ENCODE measurements at regions of chr6 and their contacts with region 1.

Region 1: DNA sequence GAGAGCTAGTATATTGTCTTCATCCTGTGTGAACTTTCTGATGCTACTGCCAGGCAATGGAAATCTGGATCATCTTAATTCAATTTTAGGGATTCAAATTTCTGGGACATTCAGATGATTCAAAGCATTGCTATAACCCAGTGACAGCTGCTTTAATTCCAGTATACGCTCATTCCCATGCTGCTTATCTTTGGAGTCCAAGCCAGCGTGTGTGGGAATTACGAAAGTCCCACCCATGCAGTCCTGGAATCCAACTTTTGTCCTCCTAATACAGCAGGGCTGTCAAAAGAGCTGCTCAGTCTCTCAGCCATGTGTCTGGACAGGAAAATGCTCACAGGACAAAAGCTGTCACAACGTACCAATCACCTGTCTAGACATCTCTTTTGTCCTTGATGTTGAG is 219.8 kb downstream of the LAMA2 start:
- DNase-seq: peak; percentile 21 to 65
- ATAC-seq: peak; percentile 53 to 70
- H3K4me3 ChIP-seq: no peak overlapping the region
- H3K27ac ChIP-seq: peak overlapping the region; percentile 54 to 76 (median 69)
- H3K4me1 ChIP-seq: peaks cover 0 to 24% of the 10 kb centered on the region in 2 donors
- H3K27me3 ChIP-seq: no peaks in the 10 kb centered on the region
- CTCF ChIP-seq: no peak
- POLR2A ChIP-seq: no peak

Region 2: DNA sequence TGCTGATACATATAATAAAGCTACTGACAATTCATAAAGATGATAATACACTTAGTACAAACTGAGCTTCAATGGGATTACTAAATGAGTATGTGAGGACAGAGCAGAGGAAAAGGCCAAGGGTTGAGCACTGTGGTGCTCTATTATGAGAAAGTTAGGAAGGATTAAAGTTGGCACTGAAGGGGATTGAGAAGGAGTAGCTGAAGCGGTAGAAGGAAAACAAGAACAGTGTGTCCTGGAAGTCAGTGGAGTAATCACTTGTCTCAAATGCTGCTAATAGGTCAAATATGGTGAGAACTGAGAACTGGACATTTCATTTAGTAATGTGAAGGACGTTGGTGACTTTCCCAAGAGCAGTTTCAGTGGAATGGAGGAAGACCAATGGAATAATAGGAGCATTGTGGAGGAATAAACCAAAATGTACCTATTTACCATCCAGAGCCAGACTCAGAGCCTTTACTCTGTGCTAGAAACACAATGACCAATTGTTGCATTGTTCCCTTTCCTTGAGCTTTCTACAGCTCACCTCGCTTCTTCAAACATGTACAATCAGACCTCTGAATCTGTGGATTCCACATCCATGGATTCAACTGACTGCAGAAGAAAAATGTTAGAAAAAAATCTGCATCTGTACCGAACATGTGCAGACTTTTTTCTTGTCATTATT is 36.1 kb after region 1 on chr6:
- in situ Hi-C with region 1: no loop called
- intact Hi-C with region 1: loop called (anchors 5 kb)
- DNase-seq: peak; percentile 41 to 48
- ATAC-seq: peak; percentile 80 to 86
- H3K4me3 ChIP-seq: no peak overlapping the region
- H3K27ac ChIP-seq: peak overlapping the region; percentile 66 to 85 (median 72)
- H3K4me1 ChIP-seq: peaks cover 32 to 54% of the 10 kb centered on the region in 2 donors
- H3K27me3 ChIP-seq: no peaks in the 10 kb centered on the region
- CTCF ChIP-seq: no peak
- POLR2A ChIP-seq: peak; percentile 16 to 41

Region 3: DNA sequence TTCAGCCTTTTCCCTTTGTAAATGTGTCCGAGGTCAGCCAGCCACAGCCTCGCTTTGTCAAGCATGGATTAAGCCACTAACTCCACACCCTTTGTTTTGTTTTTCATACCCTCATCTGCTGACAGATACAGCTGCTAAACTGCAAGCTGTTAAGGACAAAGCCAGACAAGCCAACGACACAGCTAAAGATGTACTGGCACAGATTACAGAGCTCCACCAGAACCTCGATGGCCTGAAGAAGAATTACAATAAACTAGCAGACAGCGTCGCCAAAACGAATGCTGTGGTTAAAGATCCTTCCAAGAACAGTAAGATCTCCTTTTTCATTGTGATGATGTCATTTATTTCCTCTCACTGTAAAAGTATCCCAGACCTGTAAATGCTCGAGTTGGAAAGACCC is 337.9 kb after region 1 on chr6:
- in situ Hi-C with region 1: no loop called
- intact Hi-C with region 1: no loop called
- DNase-seq: no peak
- ATAC-seq: no peak
- H3K4me3 ChIP-seq: no peak overlapping the region
- H3K27ac ChIP-seq: no peak overlapping the region
- H3K4me1 ChIP-seq: no peaks in the 10 kb centered on the region
- H3K27me3 ChIP-seq: no peaks in the 10 kb centered on the region
- CTCF ChIP-seq: no peak
- POLR2A ChIP-seq: no peak

Measured in gastrocnemius medialis (tissue), 4 donors.